ENCODE measurements at regions of chr12 and their contacts with region 1.

Region 1: DNA sequence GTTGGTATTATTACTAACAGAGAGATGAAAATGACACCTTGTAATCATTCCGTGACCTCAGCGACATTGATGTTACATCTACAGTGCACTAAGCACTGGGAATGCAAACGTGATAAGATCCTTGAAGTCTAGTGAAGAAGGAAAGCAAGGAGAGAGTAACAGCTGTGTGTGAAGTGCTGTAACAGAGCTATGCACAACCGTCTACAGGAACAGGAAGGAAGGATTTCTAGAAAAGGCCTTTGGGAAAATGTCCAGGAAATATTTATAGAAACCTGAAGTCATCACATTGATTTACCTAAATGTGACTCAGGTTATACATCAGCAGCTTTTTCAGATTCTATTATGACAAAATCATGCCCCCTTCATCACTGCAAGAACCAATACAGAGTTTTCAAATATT is 304.2 kb upstream of the AMIGO2 start:
- DNase-seq: no peak
- H3K4me3 ChIP-seq: no peak overlapping the region
- H3K27ac ChIP-seq: no peak overlapping the region
- H3K4me1 ChIP-seq: no peaks in the 10 kb centered on the region
- H3K27me3 ChIP-seq: no peaks in the 10 kb centered on the region
- CTCF ChIP-seq: no peak
- POLR2A ChIP-seq: no peak

Region 2: GRCh38 chr12:47350062-47350408 is 33.9 kb before region 1 on chr12:
- intact Hi-C with region 1: loop called (anchors 2 kb)
- DNase-seq: no peak
- H3K4me3 ChIP-seq: no peak overlapping the region
- H3K27ac ChIP-seq: no peak overlapping the region
- H3K4me1 ChIP-seq: no peaks in the 10 kb centered on the region
- H3K27me3 ChIP-seq: no peaks in the 10 kb centered on the region
- CTCF ChIP-seq: no peak
- POLR2A ChIP-seq: no peak

Region 3: DNA sequence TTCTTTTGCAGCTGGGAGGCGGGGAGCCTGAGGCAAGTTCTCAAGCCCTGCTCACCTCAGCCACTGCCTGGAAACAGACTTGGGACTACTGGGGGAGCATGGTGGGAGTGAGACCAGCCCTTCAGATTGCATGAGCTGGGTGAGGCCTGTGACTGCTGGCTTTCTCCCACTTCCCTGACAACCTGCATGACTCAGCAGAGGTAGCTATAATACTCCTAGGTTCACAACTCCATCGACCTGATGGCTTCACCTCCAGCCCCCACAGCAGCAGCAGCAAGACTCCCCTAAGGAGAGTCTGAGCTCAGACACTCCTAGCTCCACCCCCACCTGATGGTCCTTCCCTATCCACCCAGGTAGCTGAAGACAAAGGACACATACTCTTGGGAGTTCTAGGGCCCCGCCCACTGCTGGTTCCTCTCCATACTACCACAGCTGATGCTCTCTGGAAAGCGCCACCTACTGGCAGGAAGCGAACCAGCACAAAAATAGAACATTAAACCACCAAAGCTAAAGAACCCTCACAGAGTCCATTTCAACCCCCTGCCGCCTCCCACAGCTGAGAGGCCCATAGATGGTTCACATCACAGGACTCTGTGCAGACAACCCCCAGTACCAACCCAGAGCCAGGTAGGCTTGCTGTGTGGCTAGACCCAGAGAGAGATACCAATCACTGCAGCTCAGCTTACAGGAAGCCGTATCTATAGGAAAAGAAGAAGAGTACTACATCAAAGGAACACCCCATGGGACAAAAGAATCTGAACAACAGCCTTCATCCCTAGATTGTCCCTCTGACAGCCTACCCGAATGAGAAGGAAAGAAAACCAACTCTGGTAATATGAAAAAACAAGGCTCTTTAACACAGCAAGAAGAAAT is 253.2 kb after region 1 on chr12:
- intact Hi-C with region 1: no loop called
- DNase-seq: no peak
- H3K4me3 ChIP-seq: no peak overlapping the region
- H3K27ac ChIP-seq: no peak overlapping the region
- H3K4me1 ChIP-seq: no peaks in the 10 kb centered on the region
- H3K27me3 ChIP-seq: no peaks in the 10 kb centered on the region
- CTCF ChIP-seq: no peak
- POLR2A ChIP-seq: no peak